ENCODE measurements at regions of chr10 and their contacts with region 1.

Region 1: GRCh38 chr10:96896884-96897589 is 64.9 kb downstream of the LCOR start:
- DNase-seq: no peak
- H3K4me3 Mint-ChIP-seq: no peak overlapping the region
- H3K27ac Mint-ChIP-seq: no peak overlapping the region
- H3K4me1 Mint-ChIP-seq: peaks cover 20% of the 10 kb centered on the region
- H3K27me3 Mint-ChIP-seq: no peaks in the 10 kb centered on the region
- CTCF ChIP-seq: no peak

Region 2: GRCh38 chr10:96878057-96878456 is 19.0 kb before region 1 on chr10:
- CTCF ChIA-PET with region 1: no interaction called
- POLR2A ChIA-PET with region 1: no interaction called
- intact Hi-C with region 1: no loop called
- DNase-seq: no peak
- H3K4me3 Mint-ChIP-seq: no peak overlapping the region
- H3K27ac Mint-ChIP-seq: no peak overlapping the region
- H3K4me1 Mint-ChIP-seq: peaks cover 19% of the 10 kb centered on the region
- H3K27me3 Mint-ChIP-seq: no peaks in the 10 kb centered on the region
- CTCF ChIP-seq: no peak

Region 3: DNA sequence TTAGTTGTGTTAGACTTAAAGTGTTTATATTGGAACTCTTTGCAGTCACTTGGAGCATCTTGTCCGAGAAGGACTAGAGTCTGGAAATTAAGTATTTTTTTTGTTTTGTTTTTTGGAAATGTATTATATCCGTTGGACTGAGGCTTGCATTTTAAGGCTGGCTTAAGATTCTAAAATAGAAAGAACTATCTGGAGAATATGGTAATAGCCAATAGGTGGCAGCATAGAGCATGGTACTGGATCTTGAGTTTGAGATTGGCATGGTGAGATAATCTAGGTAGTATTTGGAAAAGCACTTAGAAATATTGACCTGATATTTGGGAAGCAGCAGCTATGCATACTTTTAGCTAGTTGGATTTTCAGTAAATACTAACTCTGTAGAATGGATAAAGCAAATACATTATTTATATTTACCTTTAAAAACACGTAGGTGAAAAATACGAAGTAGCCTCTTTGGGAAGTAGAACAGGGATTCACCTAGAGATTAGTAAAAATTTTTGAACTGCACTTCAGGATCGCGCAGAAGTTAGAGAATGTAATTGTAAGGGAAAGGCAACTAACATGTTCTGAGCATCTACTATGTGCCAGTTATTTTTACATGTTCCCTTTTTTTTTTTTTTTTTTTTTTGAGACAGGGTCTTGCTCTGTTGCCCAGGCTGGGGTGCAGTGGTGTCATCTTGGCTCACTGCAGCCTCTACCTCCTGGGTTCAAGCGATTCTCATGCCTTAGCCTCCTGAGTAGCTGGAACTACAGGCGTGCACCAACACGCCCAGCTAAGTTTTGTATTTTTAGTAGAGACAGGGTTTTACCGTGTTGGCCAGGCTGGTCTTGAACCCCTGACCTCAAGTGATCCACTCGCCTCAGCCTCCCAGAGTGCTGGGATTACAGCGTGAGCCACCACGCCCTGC is 13.7 kb after region 1 on chr10:
- CTCF ChIA-PET with region 1: interaction called, 11 read pairs
- POLR2A ChIA-PET with region 1: interaction called, 3 read pairs
- intact Hi-C with region 1: no loop called
- DNase-seq: peak; percentile 62
- H3K4me3 Mint-ChIP-seq: no peak overlapping the region
- H3K27ac Mint-ChIP-seq: no peak overlapping the region
- H3K4me1 Mint-ChIP-seq: peaks cover 12% of the 10 kb centered on the region
- H3K27me3 Mint-ChIP-seq: no peaks in the 10 kb centered on the region
- CTCF ChIP-seq: peak; percentile 56

Measured in MCF 10A (cell line).